ENCODE measurements at regions of chr19 and their contacts with region 1.

Region 1: DNA sequence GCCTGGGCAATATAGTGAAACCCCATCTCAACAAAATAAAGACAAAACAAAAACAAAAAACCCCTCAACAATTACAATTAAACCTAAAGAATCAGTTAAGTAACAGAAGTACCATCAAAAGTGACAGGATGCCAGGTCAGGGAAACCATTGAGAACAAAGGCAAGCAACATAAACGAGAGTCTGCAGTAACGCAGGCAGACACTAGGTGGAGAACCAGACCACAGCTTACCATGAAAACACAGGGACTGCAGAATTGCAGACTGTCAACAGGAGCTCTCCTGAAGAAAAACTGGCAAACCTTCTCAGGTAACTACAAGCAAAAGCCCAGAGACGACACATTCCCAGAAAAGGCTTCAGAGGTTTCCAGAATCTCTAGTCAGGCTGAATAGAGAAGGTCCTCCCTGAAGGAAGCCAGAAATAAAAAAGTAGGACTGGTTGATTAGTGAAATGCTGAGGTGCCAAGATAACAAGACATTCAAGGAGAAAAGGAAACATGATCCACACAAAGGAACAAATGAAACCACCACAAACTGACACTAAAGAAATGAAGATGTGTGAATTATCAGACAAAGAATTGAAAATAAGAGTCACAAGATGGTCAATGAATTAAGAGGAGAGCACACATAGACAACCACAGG is 2.2 kb upstream of the ZNF665 start:
- DNase-seq: peak; percentile 95
- H3K4me3 ChIP-seq: no peak overlapping the region
- H3K27ac ChIP-seq: peak overlapping the region in 2 of 4 donors; percentile 12 to 93
- H3K4me1 ChIP-seq: peaks cover 11 to 38% (median 28%) of the 10 kb centered on the region in 4 donors
- H3K27me3 ChIP-seq: no peaks in the 10 kb centered on the region
- CTCF ChIP-seq: peak; percentile 91 to 97 (median 95)
- EP300 ChIP-seq: no peak
- POLR2A ChIP-seq: no peak

Region 2: DNA sequence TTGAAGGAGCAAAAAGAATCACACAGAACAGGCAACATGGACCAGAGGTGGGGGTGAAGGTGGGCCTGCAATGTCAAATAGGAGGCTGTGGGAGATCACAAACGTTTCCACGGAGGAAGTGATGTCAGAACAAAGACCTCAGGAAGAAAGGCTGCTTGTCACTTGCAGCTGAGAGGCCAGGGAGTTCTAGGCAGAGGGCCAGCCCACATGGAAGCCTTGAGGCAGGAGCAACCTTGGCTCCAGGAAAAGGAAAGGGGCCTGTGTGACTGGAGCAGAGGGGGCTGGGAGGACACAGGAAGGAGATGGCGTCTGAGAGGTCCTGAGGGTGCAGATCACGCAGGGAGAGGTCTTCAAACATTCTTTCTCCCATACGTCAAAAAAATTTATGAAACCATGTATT is 108.4 kb before region 1 on chr19:
- intact Hi-C with region 1: no loop called
- DNase-seq: no peak
- H3K4me3 ChIP-seq: no peak overlapping the region
- H3K27ac ChIP-seq: peak overlapping the region; percentile 33 to 57 (median 42)
- H3K4me1 ChIP-seq: peaks cover 0 to 10% (median 4%) of the 10 kb centered on the region in 4 donors
- H3K27me3 ChIP-seq: no peaks in the 10 kb centered on the region
- CTCF ChIP-seq: no peak
- EP300 ChIP-seq: no peak
- POLR2A ChIP-seq: no peak

Region 3: DNA sequence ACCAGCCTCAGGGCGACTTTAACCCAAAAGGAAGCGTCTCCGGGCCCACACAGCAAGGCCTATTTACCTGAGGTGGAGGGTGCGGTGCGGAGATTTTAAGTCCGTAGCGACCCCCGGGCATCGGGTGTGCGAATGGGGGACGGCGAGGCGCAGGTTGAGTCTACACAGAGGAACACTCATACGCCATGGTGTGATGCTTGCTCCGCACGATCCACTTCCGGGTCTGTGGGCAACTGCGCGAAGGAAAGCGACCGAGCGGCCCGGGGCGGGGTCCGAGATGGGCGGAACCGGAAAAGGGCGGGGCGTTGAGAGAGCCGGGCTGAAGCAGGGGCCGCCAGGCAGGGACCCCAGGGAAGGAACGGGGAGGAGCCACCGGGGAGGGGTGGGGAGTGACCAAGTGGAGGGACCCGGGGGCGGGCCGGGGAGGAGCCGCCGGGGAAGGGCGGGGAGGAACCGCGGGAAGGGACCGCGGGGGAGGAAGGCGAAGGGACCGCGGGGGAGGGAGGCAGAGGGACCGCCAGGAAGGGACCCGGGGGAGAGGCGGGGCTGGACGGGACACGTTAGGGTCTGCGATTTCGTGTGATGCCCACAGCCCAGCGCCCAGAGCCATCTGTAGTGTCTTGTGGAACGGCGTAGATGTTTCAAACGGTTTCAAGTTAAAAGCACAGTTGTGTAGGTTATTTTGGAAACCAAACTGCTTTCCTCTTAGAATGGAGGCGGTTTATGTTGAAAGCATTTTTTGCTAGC is 92.0 kb before region 1 on chr19 and contains the start of gene ZNF160:
- intact Hi-C with region 1: loop called (anchors 5 kb)
- DNase-seq: peak; percentile 99
- H3K4me3 ChIP-seq: peak within 1 kb of the TSS; percentile 91 to 93 (median 91)
- H3K27ac ChIP-seq: peak within 1 kb of the TSS; percentile 91 to 97 (median 94)
- H3K4me1 ChIP-seq: peaks cover 24 to 39% (median 32%) of the 10 kb centered on the region in 4 donors
- H3K27me3 ChIP-seq: no peaks in the 10 kb centered on the region
- CTCF ChIP-seq: no peak
- EP300 ChIP-seq: no peak
- POLR2A ChIP-seq: peak; percentile 56
- total RNA-seq, gene ZNF160: 25.3 to 40.3 (median 27.1) TPM

Region 4: DNA sequence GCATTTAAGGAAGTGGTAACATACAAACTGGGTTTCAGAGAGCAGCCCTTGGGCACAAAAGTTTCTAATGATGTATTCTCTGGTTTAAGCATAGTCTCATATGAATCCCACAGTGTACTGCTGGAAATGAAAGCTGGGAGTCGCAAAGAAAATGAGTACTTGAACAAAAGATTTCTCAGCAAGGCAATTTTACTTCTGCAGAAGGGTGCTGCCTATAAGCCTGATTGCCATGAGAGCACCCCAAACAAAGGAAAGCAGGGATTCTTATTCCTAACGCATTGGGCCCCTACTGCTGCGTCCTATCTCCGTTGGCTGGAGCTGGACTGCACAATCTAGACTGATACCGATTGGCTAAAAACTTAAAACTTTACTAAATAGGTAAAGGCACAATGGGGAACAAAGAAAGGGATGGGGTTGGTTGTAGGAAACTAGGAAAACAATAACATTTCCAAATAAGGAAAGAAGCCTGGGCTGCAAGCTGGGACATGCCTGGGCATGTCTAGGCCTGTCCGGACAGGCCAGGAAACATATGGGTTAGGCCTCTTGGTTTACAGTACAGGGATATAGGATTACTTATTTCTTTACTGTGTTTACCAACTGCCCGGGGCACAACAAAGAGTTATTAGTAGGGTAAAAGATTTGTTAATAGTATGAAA is 99.5 kb after region 1 on chr19:
- intact Hi-C with region 1: no loop called
- DNase-seq: no peak
- H3K4me3 ChIP-seq: no peak overlapping the region
- H3K27ac ChIP-seq: no peak overlapping the region
- H3K4me1 ChIP-seq: no peaks in the 10 kb centered on the region
- H3K27me3 ChIP-seq: peaks cover 0 to 5% (median 0%) of the 10 kb centered on the region in 4 donors
- CTCF ChIP-seq: no peak
- EP300 ChIP-seq: no peak
- POLR2A ChIP-seq: no peak

Region 5: DNA sequence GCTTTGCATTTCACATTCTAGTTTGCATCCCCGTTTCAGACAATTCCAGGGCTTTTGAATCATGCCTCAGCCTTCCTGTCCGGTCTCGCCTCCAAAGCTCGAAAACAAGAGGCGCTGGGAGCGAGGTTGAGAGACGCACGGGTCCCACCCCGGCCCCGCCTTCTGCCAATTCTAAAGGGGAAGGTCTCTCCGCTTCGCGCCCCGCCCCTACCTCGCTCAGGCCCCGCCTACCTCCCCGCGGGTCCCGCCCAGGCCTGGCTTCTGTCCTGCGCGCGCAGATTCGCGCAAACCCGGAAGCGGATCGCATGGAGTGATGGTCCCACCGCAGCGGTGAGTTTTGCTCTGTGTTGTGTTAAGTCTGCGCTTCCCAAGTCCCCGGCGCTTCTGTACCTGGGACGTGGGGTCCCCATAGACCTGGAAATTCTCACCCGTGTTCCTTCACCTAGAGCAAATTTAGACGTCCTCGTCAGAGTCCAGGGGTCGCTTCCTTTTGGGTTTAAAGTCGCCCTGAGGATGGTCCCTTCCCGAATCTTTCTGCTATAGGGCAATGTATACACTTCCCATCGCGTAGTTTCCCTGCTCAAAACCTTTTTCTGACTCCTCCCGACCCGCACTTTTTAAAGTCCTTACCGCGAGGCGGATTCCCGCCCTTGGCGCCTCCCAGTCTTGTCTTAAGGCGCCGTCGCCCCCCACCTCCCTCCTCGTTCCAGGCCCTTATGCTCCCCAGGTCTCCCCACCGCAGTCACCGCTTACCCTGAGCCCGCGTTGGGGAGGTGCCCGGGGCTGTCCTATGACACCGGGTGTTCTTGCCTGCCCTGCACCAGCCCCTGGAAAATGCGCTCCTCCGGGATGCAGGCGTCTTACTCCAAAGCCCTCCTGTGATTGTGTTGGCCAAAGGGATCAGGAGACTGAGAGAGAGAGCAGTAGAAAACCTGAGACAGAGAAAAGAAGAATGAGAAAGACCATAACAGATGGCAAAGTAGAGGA is 138.4 kb after region 1 on chr19 and contains the start of gene ZNF845:
- intact Hi-C with region 1: loop called (anchors 10 kb)
- DNase-seq: peak; percentile 98
- H3K4me3 ChIP-seq: peak within 1 kb of the TSS; percentile 69 to 77 (median 70)
- H3K27ac ChIP-seq: peak within 1 kb of the TSS; percentile 73 to 85 (median 79)
- H3K4me1 ChIP-seq: peaks cover 7 to 20% (median 18%) of the 10 kb centered on the region in 4 donors
- H3K27me3 ChIP-seq: peaks cover 0 to 4% (median 0%) of the 10 kb centered on the region in 4 donors
- CTCF ChIP-seq: no peak
- EP300 ChIP-seq: no peak
- POLR2A ChIP-seq: no peak
- total RNA-seq, gene ZNF845: 4.4 to 6.2 (median 5.9) TPM

Region 6: GRCh38 chr19:53394974-53395839 is 199.8 kb after region 1 on chr19 and contains the start of gene ZNF765:
- intact Hi-C with region 1: loop called (anchors 10 kb)
- DNase-seq: peak; percentile 99
- H3K4me3 ChIP-seq: peak within 1 kb of the TSS; percentile 65 to 85 (median 74)
- H3K27ac ChIP-seq: peak within 1 kb of the TSS; percentile 79 to 89 (median 84)
- H3K4me1 ChIP-seq: peaks cover 8 to 28% (median 25%) of the 10 kb centered on the region in 4 donors
- H3K27me3 ChIP-seq: no peaks in the 10 kb centered on the region
- CTCF ChIP-seq: peak; percentile 47 to 62 (median 49)
- EP300 ChIP-seq: no peak
- POLR2A ChIP-seq: peak; percentile 48
- total RNA-seq, gene ZNF765: 7.1 to 12.5 (median 8.5) TPM

Region 7: GRCh38 chr19:53511933-53512374 is 316.6 kb after region 1 on chr19:
- intact Hi-C with region 1: loop called (anchors 10 kb)
- DNase-seq: no peak
- H3K4me3 ChIP-seq: no peak overlapping the region
- H3K27ac ChIP-seq: no peak overlapping the region
- H3K4me1 ChIP-seq: peaks cover 0 to 10% (median 3%) of the 10 kb centered on the region in 4 donors
- H3K27me3 ChIP-seq: no peaks in the 10 kb centered on the region
- CTCF ChIP-seq: peak; percentile 65 to 81 (median 80)
- EP300 ChIP-seq: no peak
- POLR2A ChIP-seq: no peak

Measured in esophagus muscularis mucosa (tissue), 4 donors.